ENCODE measurements at regions of chr21 and their contacts with region 1.

Region 1: GRCh38 chr21:34526618-34527290 is 14.7 kb upstream of the KCNE1 start:
- DNase-seq: peak; percentile 100
- ATAC-seq: peak; percentile 79
- H3K4me3 ChIP-seq: peak overlapping the region; percentile 57
- H3K27ac ChIP-seq: peak overlapping the region; percentile 58
- H3K4me1 ChIP-seq: peaks cover 11% of the 10 kb centered on the region
- H3K27me3 ChIP-seq: no peaks in the 10 kb centered on the region
- CTCF ChIP-seq: no peak
- POLR2A ChIP-seq: peak; percentile 99
- RAD21 ChIP-seq: no peak; the same call in 1 of the 2 replicates

Region 2: DNA sequence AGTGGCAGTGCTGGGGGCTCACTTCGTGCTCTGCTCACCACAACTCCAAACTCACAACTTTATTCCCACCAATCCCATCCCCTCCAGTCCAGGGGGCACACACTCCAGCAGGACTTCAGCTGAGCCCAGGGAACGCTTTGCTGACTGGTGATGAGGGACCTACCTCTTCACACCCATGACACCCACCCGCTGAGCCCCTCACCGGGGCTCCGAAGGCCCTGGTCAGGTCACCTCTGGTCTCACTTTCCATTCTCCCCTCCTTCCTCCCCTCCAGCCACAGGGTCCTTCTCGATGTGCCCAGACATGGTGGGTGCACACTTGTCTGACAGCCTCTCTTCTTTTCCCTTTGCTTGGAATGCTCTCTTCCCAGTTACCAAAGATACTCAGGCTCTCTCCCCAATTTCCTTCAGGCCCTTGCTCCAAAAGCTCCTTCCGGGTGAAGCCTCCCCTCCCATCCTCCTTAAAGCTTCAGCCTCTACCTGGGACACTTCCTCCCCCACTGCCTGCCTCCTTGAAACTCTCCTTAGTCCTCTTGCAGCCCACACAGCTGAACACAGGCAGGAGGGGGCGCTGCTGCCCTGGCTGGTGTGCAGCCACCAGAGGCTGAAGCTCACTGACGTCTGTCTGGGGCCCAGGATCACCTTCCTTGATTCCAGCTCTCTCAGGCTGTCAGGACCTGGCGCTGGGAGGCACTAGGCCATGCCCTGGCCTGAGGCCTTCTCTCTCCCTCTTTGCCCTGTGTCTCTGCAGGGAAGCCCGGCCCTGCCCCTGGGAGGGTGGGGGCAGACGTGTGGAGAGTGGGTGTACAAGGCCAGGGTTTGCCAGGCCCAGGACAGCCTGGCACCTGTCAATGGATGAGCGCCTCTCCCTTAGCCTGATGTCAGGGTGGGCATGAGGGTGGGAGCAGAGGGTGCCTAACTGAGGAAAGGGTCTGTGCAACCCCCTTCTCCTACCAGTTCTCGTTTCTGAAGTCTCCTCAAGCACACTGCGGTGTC is 16.3 kb before region 1 on chr21:
- CTCF ChIA-PET with region 1: interaction called, 4 read pairs
- POLR2A ChIA-PET with region 1: interaction called, 12 read pairs
- dilution Hi-C with region 1: no loop called
- in situ Hi-C with region 1: no loop called
- intact Hi-C with region 1: no loop called
- DNase-seq: peak; percentile 68
- ATAC-seq: peak; percentile 85
- H3K4me3 ChIP-seq: no peak overlapping the region
- H3K27ac ChIP-seq: no peak overlapping the region
- H3K4me1 ChIP-seq: peaks cover 1% of the 10 kb centered on the region; the same call in 1 of the 2 replicates
- H3K27me3 ChIP-seq: no peaks in the 10 kb centered on the region
- CTCF ChIP-seq: peak; percentile 92
- POLR2A ChIP-seq: peak; percentile 34; the same call in 1 of the 2 replicates
- RAD21 ChIP-seq: peak; percentile 95

Region 3: DNA sequence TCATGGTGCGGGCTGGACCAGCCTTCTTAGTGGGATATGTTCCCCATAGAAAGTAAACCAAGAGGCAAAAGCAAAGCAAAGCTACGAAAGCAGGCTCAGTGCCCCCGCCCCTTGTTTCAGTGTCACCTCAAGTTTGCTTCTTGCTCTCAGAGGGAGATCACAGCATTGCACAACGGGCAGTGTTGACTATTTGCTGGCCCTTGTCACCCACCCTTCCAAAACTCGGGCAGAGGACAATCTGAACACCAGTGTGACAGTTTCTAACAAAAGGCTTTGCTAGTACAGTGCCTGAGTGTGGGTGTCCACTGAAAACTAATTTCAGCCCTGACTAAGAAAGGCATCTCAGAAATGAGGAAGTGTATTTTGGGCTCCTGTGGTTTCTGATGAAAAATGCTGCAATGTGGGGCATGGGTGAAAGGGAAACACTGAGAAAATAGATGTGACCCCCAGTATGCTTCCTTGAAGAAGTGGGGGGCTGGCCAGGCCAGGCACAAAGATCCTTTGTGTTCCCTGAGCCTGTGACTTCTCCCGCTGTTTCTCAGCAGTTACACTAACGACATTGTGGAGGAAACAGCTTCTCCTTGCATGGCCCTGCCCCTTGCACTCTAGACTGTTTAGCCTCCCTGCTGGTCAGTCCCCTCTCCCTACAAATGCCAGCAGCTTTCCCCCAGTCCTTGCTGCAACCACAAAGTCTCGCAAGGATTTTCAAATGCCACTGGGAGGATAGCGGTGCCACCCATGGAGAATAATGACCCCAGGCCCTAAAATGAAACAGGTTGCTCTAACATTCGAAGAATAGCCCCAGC is 18.5 kb after region 1 on chr21:
- CTCF ChIA-PET with region 1: interaction called, 3 read pairs
- POLR2A ChIA-PET with region 1: interaction called, 9 read pairs
- dilution Hi-C with region 1: no loop called
- in situ Hi-C with region 1: no loop called
- intact Hi-C with region 1: loop called (anchors 2 kb)
- DNase-seq: peak; percentile 73
- ATAC-seq: peak; percentile 93
- H3K4me3 ChIP-seq: no peak overlapping the region
- H3K27ac ChIP-seq: peak overlapping the region; percentile 99
- H3K4me1 ChIP-seq: peaks cover 13% of the 10 kb centered on the region
- H3K27me3 ChIP-seq: no peaks in the 10 kb centered on the region
- CTCF ChIP-seq: no peak
- POLR2A ChIP-seq: no peak
- RAD21 ChIP-seq: no peak

Region 4: DNA sequence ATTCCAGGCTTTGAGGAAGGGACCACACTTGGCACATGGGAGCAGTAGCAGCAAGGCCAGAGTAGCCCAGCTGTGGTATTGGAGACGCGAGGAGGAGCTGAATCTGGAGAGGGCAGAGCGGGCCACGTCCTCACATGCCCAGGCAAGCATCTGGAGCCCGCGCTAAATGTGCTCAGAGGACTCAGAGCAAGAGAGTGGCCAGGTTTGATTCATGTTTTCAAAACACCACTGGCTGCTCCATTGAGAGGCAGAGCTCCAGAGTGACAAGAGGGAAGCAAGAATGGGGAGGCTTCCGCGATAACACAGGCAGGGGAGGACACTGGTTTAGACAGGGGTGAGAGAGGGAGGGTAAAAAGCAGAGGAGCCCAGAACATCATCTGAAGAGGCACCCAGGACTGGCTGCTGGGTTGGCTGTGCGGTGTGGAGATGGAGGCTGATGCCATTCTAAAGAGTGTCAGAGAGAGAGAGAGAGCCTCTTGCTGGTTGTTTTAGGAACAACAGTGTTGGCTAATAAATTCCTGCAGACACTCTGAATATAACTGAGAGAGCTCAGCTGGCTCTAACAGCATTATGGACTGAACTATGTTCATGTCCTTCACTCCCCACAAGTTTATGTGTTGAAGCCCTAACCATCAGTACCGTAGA is 55.9 kb after region 1 on chr21:
- CTCF ChIA-PET with region 1: interaction called, 4 read pairs
- POLR2A ChIA-PET with region 1: interaction called, 4 read pairs
- dilution Hi-C with region 1: no loop called
- in situ Hi-C with region 1: loop called (anchors 5 kb)
- intact Hi-C with region 1: loop called (anchors 1 kb)
- DNase-seq: peak; percentile 65
- ATAC-seq: peak; percentile 95
- H3K4me3 ChIP-seq: no peak overlapping the region
- H3K27ac ChIP-seq: no peak overlapping the region
- H3K4me1 ChIP-seq: peaks cover 9% of the 10 kb centered on the region
- H3K27me3 ChIP-seq: no peaks in the 10 kb centered on the region
- CTCF ChIP-seq: peak; percentile 75
- POLR2A ChIP-seq: no peak
- RAD21 ChIP-seq: peak; percentile 84

Region 5: GRCh38 chr21:34589511-34590282 is 62.9 kb after region 1 on chr21:
- CTCF ChIA-PET with region 1: no interaction called
- POLR2A ChIA-PET with region 1: no interaction called
- dilution Hi-C with region 1: no loop called
- in situ Hi-C with region 1: loop called (anchors 5 kb)
- intact Hi-C with region 1: no loop called
- DNase-seq: no peak
- ATAC-seq: no peak
- H3K4me3 ChIP-seq: no peak overlapping the region
- H3K27ac ChIP-seq: no peak overlapping the region
- H3K4me1 ChIP-seq: peaks cover 4% of the 10 kb centered on the region; the same call in 1 of the 2 replicates
- H3K27me3 ChIP-seq: no peaks in the 10 kb centered on the region
- CTCF ChIP-seq: no peak
- POLR2A ChIP-seq: no peak
- RAD21 ChIP-seq: no peak

Region 6: GRCh38 chr21:34603002-34603709 is 76.4 kb after region 1 on chr21:
- CTCF ChIA-PET with region 1: interaction called, 15 read pairs
- POLR2A ChIA-PET with region 1: interaction called, 3 read pairs
- dilution Hi-C with region 1: no loop called
- in situ Hi-C with region 1: no loop called
- intact Hi-C with region 1: loop called (anchors 5 kb)
- DNase-seq: peak; percentile 70
- ATAC-seq: peak; percentile 99
- H3K4me3 ChIP-seq: no peak overlapping the region
- H3K27ac ChIP-seq: no peak overlapping the region
- H3K4me1 ChIP-seq: no peaks in the 10 kb centered on the region
- H3K27me3 ChIP-seq: no peaks in the 10 kb centered on the region
- CTCF ChIP-seq: peak; percentile 90
- POLR2A ChIP-seq: no peak
- RAD21 ChIP-seq: peak; percentile 96

Region 7: GRCh38 chr21:34614633-34615486 is 88.1 kb after region 1 on chr21 and contains the start of gene RCAN1:
- CTCF ChIA-PET with region 1: no interaction called
- POLR2A ChIA-PET with region 1: no interaction called
- dilution Hi-C with region 1: no loop called
- in situ Hi-C with region 1: no loop called
- intact Hi-C with region 1: loop called (anchors 1 kb)
- DNase-seq: peak; percentile 91
- ATAC-seq: peak; percentile 97
- H3K4me3 ChIP-seq: peak within 1 kb of the TSS; percentile 63
- H3K27ac ChIP-seq: peak within 1 kb of the TSS; percentile 72
- H3K4me1 ChIP-seq: peaks cover 2% of the 10 kb centered on the region; the same call in 1 of the 2 replicates
- H3K27me3 ChIP-seq: peaks cover 7% of the 10 kb centered on the region
- CTCF ChIP-seq: no peak
- POLR2A ChIP-seq: no peak
- RAD21 ChIP-seq: no peak
- total RNA-seq, gene RCAN1: 175 and 183 TPM in 2 replicates